HEK293T (cell line): ENCODE measurements at regions of chr6 and their contacts with region 1.

Region 1: DNA sequence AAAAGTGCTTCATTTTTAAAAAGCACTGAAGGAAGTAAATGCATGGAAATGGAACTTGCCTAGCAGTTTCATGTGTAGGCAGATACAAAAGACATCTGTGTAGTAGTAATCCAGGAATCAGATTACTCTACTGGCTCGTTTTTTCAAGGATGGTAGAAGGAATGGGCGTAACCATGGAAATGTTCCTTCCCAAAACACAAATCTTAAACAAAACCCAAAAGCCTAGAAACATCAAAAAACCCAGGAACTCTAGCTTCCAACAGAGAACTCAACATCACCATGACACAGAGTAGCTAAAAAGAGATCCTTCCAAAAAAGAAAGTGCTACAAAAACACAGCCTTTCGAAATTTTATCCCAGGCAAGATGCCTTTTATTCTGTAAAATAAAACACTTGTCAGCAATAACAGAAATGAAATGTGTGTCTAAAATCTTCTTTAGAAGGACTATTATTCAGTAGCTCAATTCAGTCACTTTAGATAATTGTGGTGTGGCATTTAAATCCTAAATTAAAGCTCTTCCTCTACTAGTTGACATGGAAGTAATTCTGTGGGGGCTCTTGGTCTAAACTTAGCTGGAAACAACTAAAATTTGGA is 81.7 kb downstream of the FAM217A start:
- DNase-seq: no peak

Region 2: GRCh38 chr6:3977875-3978711 is 19.2 kb before region 1 on chr6:
- CTCF ChIA-PET with region 1: interaction called, 12 read pairs
- POLR2A ChIA-PET with region 1: interaction called, 4 read pairs
- DNase-seq: peak; percentile 42